ENCODE measurements at regions of chr5 and their contacts with region 1.

Region 1: GRCh38 chr5:126499853-126500342 is 76.7 kb downstream of the GRAMD2B start:
- DNase-seq: peak; percentile 43
- H3K4me3 Mint-ChIP-seq: no peak overlapping the region
- H3K27ac Mint-ChIP-seq: no peak overlapping the region
- H3K4me1 Mint-ChIP-seq: peaks cover 18% of the 10 kb centered on the region
- H3K27me3 Mint-ChIP-seq: no peaks in the 10 kb centered on the region

Region 2: GRCh38 chr5:126354012-126354857 is 145.7 kb before region 1 on chr5:
- CTCF ChIA-PET with region 1: interaction called, 83 read pairs
- intact Hi-C with region 1: loop called (anchors 1 kb)
- DNase-seq: no peak
- H3K4me3 Mint-ChIP-seq: peak overlapping the region; percentile 33
- H3K27ac Mint-ChIP-seq: no peak overlapping the region
- H3K4me1 Mint-ChIP-seq: peaks cover 12% of the 10 kb centered on the region
- H3K27me3 Mint-ChIP-seq: no peaks in the 10 kb centered on the region

Region 3: DNA sequence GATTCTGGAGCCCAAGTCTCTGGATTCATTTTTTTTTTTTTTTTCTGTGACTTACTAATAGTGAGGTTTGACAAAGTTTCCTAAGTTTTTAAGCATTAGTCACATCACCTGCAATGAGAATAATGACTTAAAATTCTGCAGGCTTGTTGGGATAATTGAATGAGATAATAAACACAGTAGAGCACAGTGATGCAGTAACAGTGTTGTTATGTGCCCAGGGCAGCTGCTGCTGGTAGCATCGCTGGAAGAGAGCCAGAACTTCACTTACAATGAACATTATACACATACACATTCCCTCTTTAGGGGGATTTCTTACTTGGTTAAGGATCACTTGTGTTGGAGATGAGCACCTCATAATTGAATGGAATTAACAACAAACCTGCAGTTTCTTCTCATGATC is 16.2 kb after region 1 on chr5:
- CTCF ChIA-PET with region 1: interaction called, 15 read pairs
- intact Hi-C with region 1: no loop called
- DNase-seq: no peak
- H3K4me3 Mint-ChIP-seq: no peak overlapping the region
- H3K27ac Mint-ChIP-seq: no peak overlapping the region
- H3K4me1 Mint-ChIP-seq: peaks cover 6% of the 10 kb centered on the region
- H3K27me3 Mint-ChIP-seq: no peaks in the 10 kb centered on the region

Region 4: DNA sequence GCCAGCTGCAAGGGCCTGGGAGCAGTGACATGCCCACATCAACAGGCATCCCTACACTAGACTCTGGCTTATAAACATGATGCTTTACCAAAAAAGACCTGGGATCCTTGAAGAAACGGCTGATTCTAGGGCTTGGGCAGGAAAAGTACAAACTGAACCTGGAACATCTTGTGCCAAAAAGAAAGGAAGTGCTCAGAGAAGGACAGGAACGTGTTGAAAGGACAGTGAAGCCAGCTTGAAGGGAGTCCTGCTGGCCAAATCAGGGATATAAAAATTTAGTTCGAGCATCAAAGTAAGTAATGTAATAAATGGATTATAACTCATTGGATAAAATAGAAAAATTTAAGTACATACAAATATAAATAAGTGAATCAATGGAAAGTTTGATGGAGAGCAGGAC is 37.0 kb after region 1 on chr5:
- CTCF ChIA-PET with region 1: interaction called, 28 read pairs
- intact Hi-C with region 1: loop called (anchors 1 kb)
- DNase-seq: no peak
- H3K4me3 Mint-ChIP-seq: no peak overlapping the region
- H3K27ac Mint-ChIP-seq: no peak overlapping the region
- H3K4me1 Mint-ChIP-seq: no peaks in the 10 kb centered on the region
- H3K27me3 Mint-ChIP-seq: no peaks in the 10 kb centered on the region

Region 5: DNA sequence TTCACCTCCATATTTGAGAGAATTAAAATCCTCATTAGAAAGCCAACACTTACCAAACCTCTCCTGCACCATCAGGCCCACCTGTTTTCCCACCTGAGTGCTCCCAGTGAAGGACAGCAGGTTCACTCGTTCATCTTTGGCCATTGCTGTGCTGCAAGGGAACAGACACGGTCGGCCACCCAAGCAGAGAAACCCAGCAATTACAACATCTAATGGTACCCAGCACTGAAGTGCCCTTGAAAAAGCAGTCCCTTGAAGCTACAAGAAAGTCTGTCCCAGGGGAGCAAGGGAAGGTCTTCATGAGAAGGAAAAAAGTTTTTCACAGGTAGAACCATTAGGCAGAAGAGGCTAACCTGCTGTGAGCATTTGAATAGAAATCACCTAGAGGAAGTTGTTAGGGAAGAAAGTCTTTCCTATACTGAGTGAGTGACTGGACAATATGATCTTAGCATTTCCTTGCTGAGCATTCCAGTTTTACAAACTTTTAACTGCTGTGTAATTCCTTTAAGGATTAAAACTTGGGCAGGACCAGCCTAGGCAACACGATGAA is 68.4 kb after region 1 on chr5:
- CTCF ChIA-PET with region 1: interaction called, 10 read pairs
- intact Hi-C with region 1: no loop called
- DNase-seq: no peak
- H3K4me3 Mint-ChIP-seq: no peak overlapping the region
- H3K27ac Mint-ChIP-seq: no peak overlapping the region
- H3K4me1 Mint-ChIP-seq: no peaks in the 10 kb centered on the region
- H3K27me3 Mint-ChIP-seq: no peaks in the 10 kb centered on the region